Heart left ventricle (tissue), 16 donors: ENCODE measurements at regions of chr17 and their contacts with region 1.

Region 1: GRCh38 chr17:35214631-35215273 is 20.6 kb upstream of the SLC35G3 start:
- DNase-seq: no peak
- ATAC-seq: peak in 1 of 4 donors; percentile 52
- H3K4me3 ChIP-seq: no peak overlapping the region
- H3K27ac ChIP-seq: peak overlapping the region in 9 of 12 donors; percentile 26 to 78 (median 62)
- H3K4me1 ChIP-seq: peaks cover 0 to 59% (median 12%) of the 10 kb centered on the region in 12 donors
- H3K27me3 ChIP-seq: no peaks in the 10 kb centered on the region
- CTCF ChIP-seq: no peak
- POLR2A ChIP-seq: no peak

Region 2: DNA sequence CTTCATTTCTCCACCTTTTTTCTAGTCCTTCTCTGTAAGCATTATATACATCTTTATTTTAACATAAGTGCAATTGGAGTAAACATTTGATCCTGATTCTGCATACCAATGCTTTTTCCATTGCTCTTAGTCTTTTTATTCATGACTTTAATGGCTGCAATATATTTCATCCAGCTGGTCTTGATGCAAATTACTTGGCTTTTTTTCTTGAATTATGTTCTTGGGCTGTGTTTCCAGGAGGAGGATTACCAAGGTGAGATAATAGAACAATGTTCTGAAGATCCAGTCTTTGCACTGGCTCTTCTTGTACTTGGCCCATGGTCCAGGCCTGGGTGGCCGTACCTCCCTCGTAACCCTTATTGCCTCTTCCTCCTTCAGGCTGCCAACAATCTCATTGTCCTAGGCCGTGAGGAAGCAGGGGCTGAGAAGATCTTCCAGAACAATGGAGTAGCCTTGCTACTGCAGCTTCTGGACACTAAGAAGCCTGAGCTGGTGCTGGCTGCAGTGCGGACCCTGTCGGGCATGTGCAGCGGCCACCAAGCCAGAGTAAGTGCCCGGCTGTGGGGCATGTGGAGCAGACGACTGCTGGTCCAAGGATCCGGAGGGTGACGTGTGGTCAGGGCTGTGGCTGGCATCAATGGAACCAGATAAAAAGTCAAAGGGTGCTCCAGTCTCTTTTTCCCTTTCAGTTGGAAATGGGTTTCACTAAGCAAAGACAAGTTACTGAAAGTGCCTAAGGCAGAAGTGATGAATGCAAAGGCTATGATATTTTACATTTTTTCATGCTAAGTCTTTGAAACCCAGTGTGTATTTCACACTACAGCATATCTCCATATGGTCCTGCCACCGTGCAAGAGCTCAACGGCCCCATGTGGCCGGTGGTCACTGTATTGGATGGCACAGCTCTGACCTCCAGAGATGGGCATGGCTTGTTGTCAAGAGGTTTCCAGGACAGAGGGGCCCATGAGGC is 60.3 kb before region 1 on chr17:
- intact Hi-C with region 1: loop called in 1 of 10 experiments (anchors 10 kb)
- DNase-seq: no peak
- ATAC-seq: no peak
- H3K4me3 ChIP-seq: no peak overlapping the region
- H3K27ac ChIP-seq: no peak overlapping the region
- H3K4me1 ChIP-seq: peaks cover 0 to 19% (median 3%) of the 10 kb centered on the region in 12 donors
- H3K27me3 ChIP-seq: no peaks in the 10 kb centered on the region
- CTCF ChIP-seq: no peak
- POLR2A ChIP-seq: no peak

Region 3: DNA sequence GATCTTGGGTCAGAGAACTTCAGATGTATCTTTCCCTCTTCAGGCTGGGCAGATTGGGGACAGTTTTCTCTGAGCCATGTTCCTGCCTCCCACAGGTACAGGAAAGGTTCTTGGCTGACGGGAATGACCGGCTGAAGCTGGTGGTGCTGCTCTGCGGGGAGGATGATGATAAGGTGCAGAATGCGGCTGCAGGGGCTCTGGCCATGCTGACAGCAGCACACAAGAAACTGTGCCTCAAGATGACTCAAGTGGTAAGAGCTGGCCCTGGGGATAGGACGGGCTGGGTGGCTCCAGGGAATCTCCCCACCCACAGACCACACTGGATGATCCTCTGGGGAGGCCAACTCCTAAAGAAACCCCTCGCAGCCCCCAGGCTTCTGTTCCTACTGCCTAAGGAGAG is 31.4 kb before region 1 on chr17:
- intact Hi-C with region 1: no loop called
- DNase-seq: no peak
- ATAC-seq: no peak
- H3K4me3 ChIP-seq: no peak overlapping the region
- H3K27ac ChIP-seq: no peak overlapping the region
- H3K4me1 ChIP-seq: no peaks in the 10 kb centered on the region
- H3K27me3 ChIP-seq: no peaks in the 10 kb centered on the region
- CTCF ChIP-seq: no peak
- POLR2A ChIP-seq: no peak